GM10248 (cell line): ENCODE measurements at regions of chr11 and their contacts with region 1.

Region 1: GRCh38 chr11:64864473-64865285 is 13.7 kb downstream of the EHD1 start:
- DNase-seq: peak; percentile 66
- CTCF ChIP-seq: no peak

Region 2: GRCh38 chr11:64809781-64810241 is 54.9 kb before region 1 on chr11:
- CTCF ChIA-PET with region 1: no interaction called
- POLR2A ChIA-PET with region 1: no interaction called
- DNase-seq: peak; percentile 40
- CTCF ChIP-seq: no peak

Region 3: GRCh38 chr11:64878494-64879243 is 14.0 kb after region 1 on chr11 and contains the start of gene EHD1:
- CTCF ChIA-PET with region 1: interaction called, 1,137 read pairs
- POLR2A ChIA-PET with region 1: interaction called, 225 read pairs
- DNase-seq: peak; percentile 100
- CTCF ChIP-seq: peak; percentile 79